ENCODE measurements at regions of chr7 and their contacts with region 1.

Region 1: GRCh38 chr7:149854611-149855360 is 16.6 kb downstream of the ZNF862 start:
- DNase-seq: no peak
- ATAC-seq: no peak
- H3K4me3 ChIP-seq: no peak overlapping the region
- H3K4me3 Mint-ChIP-seq: no peak overlapping the region
- H3K27ac ChIP-seq: no peak overlapping the region
- H3K27ac Mint-ChIP-seq: no peak overlapping the region
- H3K4me1 ChIP-seq: no peaks in the 10 kb centered on the region
- H3K4me1 Mint-ChIP-seq: no peaks in the 10 kb centered on the region
- H3K27me3 ChIP-seq: no peaks in the 10 kb centered on the region
- H3K27me3 Mint-ChIP-seq: no peaks in the 10 kb centered on the region
- CTCF ChIP-seq: no peak

Region 2: DNA sequence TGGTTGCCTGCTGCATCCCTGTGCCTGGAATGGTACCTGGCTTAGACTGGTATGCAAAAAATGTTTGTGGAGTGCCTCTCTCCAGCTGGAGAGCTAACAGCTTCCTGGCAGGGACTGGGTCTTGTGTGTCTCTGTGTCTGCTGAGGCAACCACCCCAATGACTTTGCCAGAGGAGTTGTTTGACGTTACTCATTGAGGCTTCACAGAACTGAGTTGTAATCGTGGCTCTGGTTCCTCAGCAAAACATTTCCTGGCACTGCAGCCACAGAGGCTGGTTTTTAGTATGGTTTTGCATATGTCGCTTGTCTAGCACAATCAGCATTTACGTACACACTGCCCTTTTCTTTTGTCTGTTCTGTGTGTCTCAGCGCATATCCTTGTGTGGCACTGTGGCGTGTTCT is 652.0 kb before region 1 on chr7:
- CTCF ChIA-PET with region 1: no interaction called
- POLR2A ChIA-PET with region 1: no interaction called
- intact Hi-C with region 1: no loop called
- DNase-seq: no peak
- ATAC-seq: no peak
- H3K4me3 ChIP-seq: no peak overlapping the region
- H3K4me3 Mint-ChIP-seq: no peak overlapping the region
- H3K27ac ChIP-seq: no peak overlapping the region
- H3K27ac Mint-ChIP-seq: no peak overlapping the region
- H3K4me1 ChIP-seq: no peaks in the 10 kb centered on the region
- H3K4me1 Mint-ChIP-seq: peaks cover 10% of the 10 kb centered on the region
- H3K27me3 ChIP-seq: no peaks in the 10 kb centered on the region
- H3K27me3 Mint-ChIP-seq: no peaks in the 10 kb centered on the region
- CTCF ChIP-seq: no peak

Region 3: DNA sequence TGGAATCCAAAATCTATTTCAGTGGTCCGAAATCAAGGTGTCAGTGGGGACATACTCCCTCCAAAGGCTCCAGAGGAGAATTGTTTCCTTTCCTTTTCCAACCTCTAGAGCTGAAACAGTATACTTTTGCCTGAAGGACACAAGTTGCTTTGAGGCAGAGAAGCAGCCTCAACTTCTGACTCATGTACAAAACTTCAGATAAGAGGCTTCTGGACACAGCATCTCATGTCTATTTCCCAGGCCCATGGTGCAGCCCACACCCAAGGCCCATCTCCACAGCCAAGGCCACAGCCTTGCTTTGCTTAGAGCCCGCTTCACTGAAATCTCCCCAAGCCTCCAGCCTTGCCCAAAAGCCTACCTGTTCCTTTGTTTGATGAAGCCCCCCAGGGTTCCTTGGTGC is 150.3 kb before region 1 on chr7:
- CTCF ChIA-PET with region 1: no interaction called
- POLR2A ChIA-PET with region 1: no interaction called
- intact Hi-C with region 1: loop called (anchors 5 kb)
- DNase-seq: no peak
- ATAC-seq: no peak
- H3K4me3 ChIP-seq: no peak overlapping the region
- H3K4me3 Mint-ChIP-seq: no peak overlapping the region
- H3K27ac ChIP-seq: no peak overlapping the region
- H3K27ac Mint-ChIP-seq: no peak overlapping the region
- H3K4me1 ChIP-seq: no peaks in the 10 kb centered on the region
- H3K4me1 Mint-ChIP-seq: peaks cover 2% of the 10 kb centered on the region
- H3K27me3 ChIP-seq: peaks cover 0 to 3% (median 0%) of the 10 kb centered on the region in 4 experiments
- H3K27me3 Mint-ChIP-seq: peaks cover 22% of the 10 kb centered on the region
- CTCF ChIP-seq: no peak

Measured in B cell (primary cell).